ENCODE measurements at regions of chr11 and their contacts with region 1.

Region 1: GRCh38 chr11:61747192-61747966 is 5.1 kb upstream of the MYRF start:
- DNase-seq: peak; percentile 78
- ATAC-seq: peak; percentile 89
- H3K4me3 ChIP-seq: no peak overlapping the region
- H3K27ac ChIP-seq: no peak overlapping the region
- H3K4me1 ChIP-seq: peaks cover 11% of the 10 kb centered on the region; the same call in 1 of the 2 replicates
- H3K27me3 ChIP-seq: no peaks in the 10 kb centered on the region
- CTCF ChIP-seq: peak; percentile 96

Region 2: DNA sequence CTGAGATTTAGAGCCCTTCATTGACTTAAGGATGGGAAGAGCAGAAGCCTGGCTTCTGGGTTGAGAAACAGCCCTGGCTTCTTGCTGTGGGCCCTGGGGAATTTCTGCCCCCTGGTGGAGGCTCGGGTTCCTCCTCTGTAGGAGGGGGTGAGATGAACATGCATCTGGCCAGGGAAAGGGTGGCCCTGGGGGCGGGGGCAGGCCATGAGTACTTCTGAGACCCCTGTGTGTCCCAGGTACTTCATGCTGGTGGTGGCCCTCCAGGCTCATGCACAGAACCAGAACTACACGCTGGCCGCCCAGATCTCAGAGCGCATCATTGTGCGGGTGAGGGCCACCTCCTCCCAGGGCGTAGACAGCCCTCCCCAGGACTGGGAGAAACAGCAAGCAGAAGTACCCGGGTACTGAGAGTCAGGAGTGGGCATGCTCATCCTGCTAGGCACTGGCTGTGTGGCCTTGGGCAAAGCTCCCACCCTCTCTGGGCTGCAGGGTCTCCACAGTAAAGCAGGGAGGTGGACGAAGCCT is 29.2 kb after region 1 on chr11:
- CTCF ChIA-PET with region 1: no interaction called
- POLR2A ChIA-PET with region 1: interaction called, 31 read pairs
- intact Hi-C with region 1: loop called (anchors 1 kb)
- DNase-seq: peak; percentile 80
- ATAC-seq: peak; percentile 83
- H3K4me3 ChIP-seq: no peak overlapping the region
- H3K27ac ChIP-seq: no peak overlapping the region
- H3K4me1 ChIP-seq: no peaks in the 10 kb centered on the region
- H3K27me3 ChIP-seq: no peaks in the 10 kb centered on the region
- CTCF ChIP-seq: peak; percentile 94